B cell (primary cell): ENCODE measurements at regions of chr17 and their contacts with region 1.

Region 1: DNA sequence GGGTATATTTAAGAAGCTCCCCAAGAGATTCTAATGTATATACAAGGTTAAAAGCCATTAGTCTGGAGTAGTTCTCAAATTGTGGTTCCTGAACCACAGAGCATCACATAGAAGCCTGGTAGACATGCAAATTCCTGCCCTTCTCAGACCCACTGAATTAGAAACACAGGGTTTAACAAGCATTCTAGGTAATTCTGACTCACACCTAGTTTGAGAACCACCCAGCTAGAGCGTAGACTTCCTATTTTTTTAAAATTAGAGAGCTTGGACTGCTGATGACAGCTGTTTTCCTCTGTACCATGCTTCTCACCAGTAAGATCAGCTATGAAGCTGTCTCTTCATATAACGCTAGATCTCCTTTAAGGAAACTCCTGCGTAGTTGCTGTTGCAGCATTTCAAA is 50.6 kb downstream of the HS3ST3B1 start:
- DNase-seq: peak; percentile 79
- ATAC-seq: peak; percentile 93
- H3K4me3 ChIP-seq: no peak overlapping the region
- H3K4me3 Mint-ChIP-seq: peak overlapping the region; percentile 60
- H3K27ac ChIP-seq: no peak overlapping the region
- H3K27ac Mint-ChIP-seq: peak overlapping the region; percentile 64
- H3K4me1 ChIP-seq: peaks cover 15 to 20% of the 10 kb centered on the region in 2 donors
- H3K4me1 Mint-ChIP-seq: peaks cover 27% of the 10 kb centered on the region
- H3K27me3 ChIP-seq: peaks cover 0 to 53% (median 41%) of the 10 kb centered on the region in 4 experiments
- H3K27me3 Mint-ChIP-seq: peaks cover 33% of the 10 kb centered on the region
- CTCF ChIP-seq: no peak

Region 2: GRCh38 chr17:14337596-14338079 is 13.9 kb before region 1 on chr17:
- CTCF ChIA-PET with region 1: no interaction called
- POLR2A ChIA-PET with region 1: no interaction called
- intact Hi-C with region 1: no loop called
- DNase-seq: no peak
- ATAC-seq: peak; percentile 28
- H3K4me3 ChIP-seq: no peak overlapping the region
- H3K4me3 Mint-ChIP-seq: no peak overlapping the region
- H3K27ac ChIP-seq: no peak overlapping the region
- H3K27ac Mint-ChIP-seq: no peak overlapping the region
- H3K4me1 ChIP-seq: peaks cover 6% of the 10 kb centered on the region in 2 donors
- H3K4me1 Mint-ChIP-seq: peaks cover 27% of the 10 kb centered on the region
- H3K27me3 ChIP-seq: peaks cover 0 to 12% (median 0%) of the 10 kb centered on the region in 4 experiments
- H3K27me3 Mint-ChIP-seq: peaks cover 28% of the 10 kb centered on the region
- CTCF ChIP-seq: no peak

Region 3: DNA sequence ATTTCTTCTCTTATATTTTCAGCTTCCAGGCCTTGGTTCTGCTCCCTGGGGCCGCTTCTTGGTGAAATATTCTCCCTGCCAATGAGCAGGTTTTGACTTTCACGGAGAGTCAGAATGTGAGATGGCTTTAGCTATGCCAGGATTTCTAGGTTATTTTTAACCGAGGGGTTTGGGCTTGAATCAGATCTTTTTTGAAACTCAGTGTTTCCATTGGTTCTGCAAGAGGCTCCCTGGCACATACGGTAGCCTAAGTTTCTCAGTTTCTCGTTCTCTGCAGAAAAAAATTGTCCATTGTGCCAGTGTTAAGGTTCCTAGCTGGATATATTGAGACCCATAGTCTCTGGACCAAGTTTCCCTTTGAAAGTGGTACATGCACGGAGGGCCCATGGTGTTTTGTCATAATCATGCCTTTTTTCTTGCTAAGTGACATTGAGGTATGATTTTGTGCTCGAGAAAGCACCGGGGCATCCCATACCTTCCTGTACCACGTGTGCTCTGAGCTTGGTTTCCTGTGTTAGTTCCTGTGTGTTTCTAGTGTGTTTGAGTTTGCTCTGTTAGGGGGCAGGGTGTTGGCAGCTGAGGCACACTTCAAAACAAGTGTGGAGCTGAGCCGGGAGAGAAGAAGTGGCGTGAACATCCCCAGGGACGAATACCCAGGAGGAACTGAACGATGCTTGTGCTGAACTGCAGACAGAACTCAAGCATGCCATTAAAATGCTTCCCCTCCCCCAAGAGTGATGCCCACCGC is 76.6 kb after region 1 on chr17:
- CTCF ChIA-PET with region 1: interaction called, 12 read pairs
- POLR2A ChIA-PET with region 1: interaction called, 4 read pairs
- intact Hi-C with region 1: loop called (anchors 1 kb)
- DNase-seq: peak; percentile 77
- ATAC-seq: peak; percentile 87
- H3K4me3 ChIP-seq: peak overlapping the region; percentile 13 to 71 (median 38)
- H3K4me3 Mint-ChIP-seq: peak overlapping the region; percentile 83
- H3K27ac ChIP-seq: peak overlapping the region; percentile 58 to 79
- H3K27ac Mint-ChIP-seq: peak overlapping the region; percentile 93
- H3K4me1 ChIP-seq: peaks cover 44 to 45% of the 10 kb centered on the region in 2 donors
- H3K4me1 Mint-ChIP-seq: peaks cover 45% of the 10 kb centered on the region
- H3K27me3 ChIP-seq: no peaks in the 10 kb centered on the region
- H3K27me3 Mint-ChIP-seq: peaks cover 5% of the 10 kb centered on the region
- CTCF ChIP-seq: no peak

Region 4: DNA sequence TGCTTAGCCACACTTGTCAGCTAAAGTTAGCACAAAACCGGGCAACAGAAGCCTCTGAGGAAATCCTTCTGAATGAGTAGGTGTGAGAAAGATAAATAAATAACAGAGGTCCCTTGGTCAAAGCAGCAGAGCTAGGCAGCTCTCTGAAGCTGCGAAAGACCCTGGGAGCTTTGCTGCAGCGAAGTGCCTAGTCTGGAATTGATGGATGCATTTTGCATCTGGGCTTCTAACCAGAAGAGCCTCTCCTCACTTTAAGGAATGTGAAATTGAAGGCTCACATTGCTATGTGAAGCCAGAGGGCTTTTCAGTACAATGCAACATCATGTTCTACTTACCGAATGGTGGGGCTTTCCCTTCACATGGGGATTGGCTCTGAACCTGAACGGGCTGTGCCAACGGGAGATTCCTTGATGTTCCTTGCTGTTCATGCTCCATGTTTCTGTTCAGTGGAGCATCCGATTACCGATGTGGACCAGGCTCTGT is 224.0 kb after region 1 on chr17:
- CTCF ChIA-PET with region 1: no interaction called
- POLR2A ChIA-PET with region 1: no interaction called
- intact Hi-C with region 1: no loop called
- DNase-seq: no peak
- ATAC-seq: no peak
- H3K4me3 ChIP-seq: no peak overlapping the region
- H3K4me3 Mint-ChIP-seq: no peak overlapping the region
- H3K27ac ChIP-seq: no peak overlapping the region
- H3K27ac Mint-ChIP-seq: no peak overlapping the region
- H3K4me1 ChIP-seq: no peaks in the 10 kb centered on the region
- H3K4me1 Mint-ChIP-seq: peaks cover 2% of the 10 kb centered on the region
- H3K27me3 ChIP-seq: no peaks in the 10 kb centered on the region
- H3K27me3 Mint-ChIP-seq: peaks cover 12% of the 10 kb centered on the region
- CTCF ChIP-seq: no peak